A673 (cell line): ENCODE measurements at regions of chr11 and their contacts with region 1.

Region 1: GRCh38 chr11:92552942-92553341 is 328.3 kb downstream of the FAT3 start:
- DNase-seq: peak; percentile 46
- H3K4me3 ChIP-seq: no peak overlapping the region
- H3K27ac ChIP-seq: no peak overlapping the region
- H3K4me1 ChIP-seq: peaks cover 7% of the 10 kb centered on the region
- H3K27me3 ChIP-seq: no peaks in the 10 kb centered on the region
- CTCF ChIP-seq: peak; percentile 55

Region 2: DNA sequence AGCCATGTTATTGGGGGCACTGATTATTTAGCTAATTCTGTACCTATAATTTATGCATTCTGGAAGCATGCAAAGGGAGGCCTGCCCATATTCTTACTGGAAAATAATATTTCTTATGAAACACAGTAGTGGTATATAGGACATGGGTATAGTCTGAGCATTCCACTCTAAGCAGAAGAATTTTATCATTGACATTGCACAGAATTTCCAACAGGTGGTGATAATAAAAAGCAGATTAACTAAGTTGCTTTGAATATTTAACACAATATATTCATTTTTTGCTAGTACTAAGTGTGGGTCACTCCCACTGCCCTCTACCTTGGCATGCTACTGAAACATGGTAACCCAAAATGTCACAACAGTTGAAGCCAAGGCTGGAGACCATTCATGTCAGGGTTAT is 1057.1 kb before region 1 on chr11:
- CTCF ChIA-PET with region 1: no interaction called
- POLR2A ChIA-PET with region 1: no interaction called
- intact Hi-C with region 1: loop called (anchors 5 kb)
- DNase-seq: no peak
- H3K4me3 ChIP-seq: no peak overlapping the region
- H3K27ac ChIP-seq: no peak overlapping the region
- H3K4me1 ChIP-seq: peaks cover 13% of the 10 kb centered on the region
- H3K27me3 ChIP-seq: no peaks in the 10 kb centered on the region
- CTCF ChIP-seq: peak; percentile 28; the same call in 1 of the 2 replicates

Region 3: DNA sequence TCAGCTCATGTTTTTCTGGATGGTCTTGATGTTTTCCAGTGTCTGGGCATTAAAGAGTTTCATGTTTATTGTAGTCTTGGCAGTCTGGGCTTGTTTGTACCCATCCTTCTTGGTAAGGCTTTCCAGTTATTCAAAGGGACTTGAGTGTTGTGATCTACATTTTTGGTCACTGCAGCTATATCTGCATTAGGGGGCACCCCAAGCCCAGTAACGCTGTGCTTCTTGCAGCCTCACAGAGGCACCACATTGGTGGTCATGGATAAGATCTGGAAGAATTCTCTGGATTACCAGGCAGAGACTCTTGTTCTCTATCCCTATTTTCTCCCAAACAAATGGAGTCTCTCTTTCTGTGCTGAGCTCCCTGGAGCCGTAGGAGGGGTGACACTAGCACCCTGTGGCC is 779.9 kb before region 1 on chr11:
- CTCF ChIA-PET with region 1: no interaction called
- POLR2A ChIA-PET with region 1: no interaction called
- intact Hi-C with region 1: loop called (anchors 5 kb)
- DNase-seq: peak; percentile 86
- H3K4me3 ChIP-seq: no peak overlapping the region
- H3K27ac ChIP-seq: no peak overlapping the region
- H3K4me1 ChIP-seq: peaks cover 9% of the 10 kb centered on the region
- H3K27me3 ChIP-seq: no peaks in the 10 kb centered on the region
- CTCF ChIP-seq: peak; percentile 81

Region 4: DNA sequence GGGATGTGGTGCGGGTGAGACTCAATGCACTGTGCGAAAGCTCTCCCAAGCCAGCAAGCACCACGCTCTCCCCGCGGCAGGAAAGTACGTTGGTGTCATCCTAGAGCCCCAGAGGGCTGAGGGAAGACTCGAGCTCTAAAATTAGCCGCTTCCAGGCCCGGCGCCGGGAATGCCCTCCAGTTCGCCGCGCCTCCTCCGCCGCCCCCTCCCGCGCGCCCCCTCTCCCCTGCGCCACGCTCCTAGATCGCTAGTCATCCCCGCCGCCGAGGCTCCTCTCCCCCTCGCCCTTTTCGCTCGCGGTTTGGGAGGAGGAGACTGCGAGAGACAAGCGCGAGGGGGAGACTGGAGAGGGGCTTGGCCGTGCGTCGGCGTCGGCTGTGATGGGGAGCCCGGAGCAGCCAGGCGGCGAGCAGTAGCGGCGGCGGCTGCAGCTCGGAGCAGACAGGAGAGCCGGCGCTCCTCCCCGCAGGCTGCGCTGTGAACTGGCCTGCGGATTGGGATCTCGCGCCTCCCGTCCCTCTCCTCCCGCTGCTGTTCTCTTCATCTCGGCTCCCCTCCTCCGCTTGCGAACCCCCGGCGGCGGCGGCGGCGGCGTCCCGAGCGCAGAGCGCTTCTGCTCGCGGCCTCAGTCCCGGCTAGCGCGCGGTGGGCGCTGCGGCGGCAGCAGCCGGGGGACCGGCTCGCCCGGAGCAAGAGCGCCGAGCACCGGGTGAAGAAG is 328.4 kb before region 1 on chr11 and contains the start of gene FAT3:
- CTCF ChIA-PET with region 1: no interaction called
- POLR2A ChIA-PET with region 1: no interaction called
- intact Hi-C with region 1: loop called (anchors 5 kb)
- DNase-seq: peak; percentile 82
- H3K4me3 ChIP-seq: peak within 1 kb of the TSS; percentile 54
- H3K27ac ChIP-seq: no peak within 1 kb of the TSS
- H3K4me1 ChIP-seq: peaks cover 16% of the 10 kb centered on the region
- H3K27me3 ChIP-seq: peaks cover 44% of the 10 kb centered on the region
- CTCF ChIP-seq: no peak
- total RNA-seq, gene FAT3: 7.3 and 9.1 TPM in 2 replicates

Region 5: DNA sequence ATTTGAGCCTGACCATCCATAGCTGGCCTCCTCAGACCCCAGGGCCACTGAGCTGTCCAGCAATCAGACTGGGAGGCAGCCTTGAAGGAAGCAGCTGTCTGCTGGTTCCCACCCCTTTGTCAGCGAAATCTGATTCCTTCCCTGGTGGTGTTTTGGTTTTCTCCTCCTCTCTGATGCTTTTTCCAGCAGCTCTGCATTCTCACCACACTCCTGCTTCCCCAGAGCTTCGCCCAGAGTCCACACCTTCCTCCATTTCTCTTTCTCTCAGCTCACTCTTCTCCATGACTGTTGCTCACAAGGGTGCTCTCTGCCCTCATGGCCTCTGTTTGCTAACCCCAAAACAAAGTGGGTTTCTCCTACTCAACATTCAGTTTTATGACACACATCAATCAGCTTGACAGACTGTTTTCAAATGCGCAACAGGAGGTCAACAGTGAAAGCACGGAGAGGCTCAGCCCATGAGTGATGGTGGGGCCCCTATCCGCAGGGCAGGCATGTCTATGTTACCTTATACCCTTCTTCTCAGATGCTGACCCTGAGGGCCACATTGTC is 285.9 kb after region 1 on chr11:
- CTCF ChIA-PET with region 1: no interaction called
- POLR2A ChIA-PET with region 1: interaction called, 22 read pairs
- intact Hi-C with region 1: no loop called
- DNase-seq: peak; percentile 23
- H3K4me3 ChIP-seq: no peak overlapping the region
- H3K27ac ChIP-seq: peak overlapping the region; percentile 37
- H3K4me1 ChIP-seq: peaks cover 27% of the 10 kb centered on the region
- H3K27me3 ChIP-seq: no peaks in the 10 kb centered on the region
- CTCF ChIP-seq: no peak